ENCODE measurements at regions of chr2 and their contacts with region 1.

Region 1: GRCh38 chr2:240434728-240435456 is 571 bp upstream of the GPC1 start:
- DNase-seq: peak; percentile 69
- ATAC-seq: peak; percentile 60
- H3K4me3 ChIP-seq: peak overlapping the region; percentile 74 to 96
- H3K27ac ChIP-seq: peak overlapping the region; percentile 81
- H3K4me1 ChIP-seq: peaks cover 29 to 57% of the 10 kb centered on the region in 2 experiments
- H3K27me3 ChIP-seq: no peaks in the 10 kb centered on the region
- CTCF ChIP-seq: no peak
- POLR2A ChIP-seq: no peak
- RAD21 ChIP-seq: no peak

Region 2: DNA sequence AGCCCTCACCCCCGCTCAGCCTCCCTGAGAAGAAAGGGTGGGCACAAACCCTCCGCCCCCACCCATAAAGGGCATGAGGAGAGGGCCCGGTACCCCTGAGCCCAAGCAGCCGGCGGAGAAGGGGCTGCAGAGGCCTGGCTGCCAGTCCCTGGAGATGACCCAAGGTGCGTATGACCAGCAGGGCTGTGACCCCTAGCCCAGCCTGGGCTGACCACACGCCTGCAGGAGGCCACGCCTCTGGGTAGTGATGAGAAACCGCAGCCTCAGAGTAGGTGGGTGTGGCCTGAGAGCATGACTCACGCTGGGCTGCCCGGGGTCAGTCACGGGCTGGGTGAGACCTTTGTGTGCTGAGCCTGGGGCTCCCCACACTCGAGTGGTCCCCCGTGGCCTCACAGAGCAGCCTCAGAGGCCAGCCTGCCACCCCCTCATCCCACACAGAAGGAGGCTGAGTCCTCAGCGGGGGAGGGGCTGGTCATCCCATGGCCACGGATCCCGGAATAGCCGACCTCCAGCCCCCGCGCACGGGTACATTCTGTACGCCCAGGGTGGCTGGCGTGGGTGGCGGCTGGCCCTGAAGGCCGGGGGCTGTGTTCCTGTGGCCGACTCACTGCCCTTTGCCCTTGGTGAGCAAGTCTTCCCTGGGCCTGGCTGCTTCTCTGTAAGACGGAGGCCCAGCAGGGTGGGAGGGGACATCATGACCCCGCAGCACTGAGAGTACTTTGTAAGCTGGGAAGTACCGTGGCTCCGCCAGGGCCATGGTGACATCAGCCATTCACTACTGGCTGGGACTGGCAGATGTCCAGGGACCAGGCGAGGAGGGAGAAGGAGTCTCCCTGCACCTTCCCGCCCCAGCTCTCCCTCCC is 183.7 kb before region 1 on chr2:
- CTCF ChIA-PET with region 1: no interaction called
- POLR2A ChIA-PET with region 1: no interaction called
- RAD21 ChIA-PET with region 1: no interaction called
- intact Hi-C with region 1: loop called (anchors 5 kb)
- DNase-seq: peak; percentile 77
- ATAC-seq: peak; percentile 82
- H3K4me3 ChIP-seq: peak overlapping the region; percentile 28 to 60
- H3K27ac ChIP-seq: peak overlapping the region; percentile 85
- H3K4me1 ChIP-seq: peaks cover 40 to 74% of the 10 kb centered on the region in 2 experiments
- H3K27me3 ChIP-seq: no peaks in the 10 kb centered on the region
- CTCF ChIP-seq: no peak
- POLR2A ChIP-seq: no peak
- RAD21 ChIP-seq: no peak

Region 3: DNA sequence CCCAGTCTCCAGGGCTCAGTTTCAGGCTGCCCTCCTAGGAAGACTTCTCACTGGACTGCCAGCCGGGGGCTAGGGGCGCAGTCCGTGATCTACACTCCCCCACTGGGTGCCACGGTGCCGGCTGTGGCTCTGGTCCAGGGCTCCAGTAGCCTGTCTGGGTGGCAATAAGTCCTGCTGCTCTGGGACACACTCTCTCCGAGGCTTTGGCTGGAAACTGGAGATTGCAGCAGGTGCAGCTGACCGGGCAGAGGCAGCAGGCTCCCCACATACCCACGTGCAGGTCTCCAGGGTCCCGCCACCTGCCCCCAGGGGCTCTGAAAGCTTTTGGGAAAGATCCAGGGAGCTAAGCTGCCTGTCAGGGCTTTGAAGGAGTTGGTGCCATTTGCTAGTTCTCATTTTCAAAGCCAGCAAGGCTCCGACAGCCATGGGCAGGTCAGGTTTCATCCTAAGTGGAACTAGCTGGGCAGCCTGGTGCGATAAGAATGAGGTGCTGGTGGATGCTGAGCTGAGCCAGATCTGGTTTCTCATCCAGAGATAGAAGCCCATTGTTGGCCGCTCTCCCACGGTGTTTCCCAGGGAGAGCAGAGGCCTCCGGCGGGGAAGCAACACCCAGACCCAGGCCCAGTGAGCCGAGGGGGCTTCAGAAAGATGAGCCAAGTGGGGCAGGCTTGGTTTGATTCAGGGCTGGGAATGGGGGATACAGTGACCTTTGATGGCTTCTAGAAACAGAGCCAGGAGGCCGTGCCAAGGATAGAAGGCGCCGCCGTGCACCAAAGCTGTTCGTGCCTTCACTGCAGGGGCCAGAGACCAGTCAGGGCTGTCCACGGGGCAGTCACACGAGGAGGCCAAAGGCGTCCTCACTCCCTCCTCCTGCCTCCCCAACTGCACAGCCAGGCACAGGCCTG is 141.1 kb before region 1 on chr2:
- CTCF ChIA-PET with region 1: no interaction called
- POLR2A ChIA-PET with region 1: no interaction called
- RAD21 ChIA-PET with region 1: no interaction called
- intact Hi-C with region 1: loop called (anchors 10 kb)
- DNase-seq: no peak
- ATAC-seq: no peak
- H3K4me3 ChIP-seq: no peak overlapping the region
- H3K27ac ChIP-seq: no peak overlapping the region
- H3K4me1 ChIP-seq: peaks cover 8 to 16% of the 10 kb centered on the region in 2 experiments
- H3K27me3 ChIP-seq: no peaks in the 10 kb centered on the region
- CTCF ChIP-seq: no peak
- POLR2A ChIP-seq: no peak
- RAD21 ChIP-seq: no peak

Region 4: GRCh38 chr2:240369801-240370585 is 64.9 kb before region 1 on chr2:
- CTCF ChIA-PET with region 1: no interaction called
- POLR2A ChIA-PET with region 1: no interaction called
- RAD21 ChIA-PET with region 1: interaction called in 1 of 2 experiments, 3 read pairs
- intact Hi-C with region 1: loop called (anchors 1 kb)
- DNase-seq: peak; percentile 64
- ATAC-seq: peak; percentile 82
- H3K4me3 ChIP-seq: peak overlapping the region; percentile 9 to 51
- H3K27ac ChIP-seq: peak overlapping the region; percentile 63
- H3K4me1 ChIP-seq: peaks cover 56 to 68% of the 10 kb centered on the region in 2 experiments
- H3K27me3 ChIP-seq: no peaks in the 10 kb centered on the region
- CTCF ChIP-seq: no peak
- POLR2A ChIP-seq: no peak
- RAD21 ChIP-seq: no peak; the same call in 1 of the 2 replicates

Region 5: DNA sequence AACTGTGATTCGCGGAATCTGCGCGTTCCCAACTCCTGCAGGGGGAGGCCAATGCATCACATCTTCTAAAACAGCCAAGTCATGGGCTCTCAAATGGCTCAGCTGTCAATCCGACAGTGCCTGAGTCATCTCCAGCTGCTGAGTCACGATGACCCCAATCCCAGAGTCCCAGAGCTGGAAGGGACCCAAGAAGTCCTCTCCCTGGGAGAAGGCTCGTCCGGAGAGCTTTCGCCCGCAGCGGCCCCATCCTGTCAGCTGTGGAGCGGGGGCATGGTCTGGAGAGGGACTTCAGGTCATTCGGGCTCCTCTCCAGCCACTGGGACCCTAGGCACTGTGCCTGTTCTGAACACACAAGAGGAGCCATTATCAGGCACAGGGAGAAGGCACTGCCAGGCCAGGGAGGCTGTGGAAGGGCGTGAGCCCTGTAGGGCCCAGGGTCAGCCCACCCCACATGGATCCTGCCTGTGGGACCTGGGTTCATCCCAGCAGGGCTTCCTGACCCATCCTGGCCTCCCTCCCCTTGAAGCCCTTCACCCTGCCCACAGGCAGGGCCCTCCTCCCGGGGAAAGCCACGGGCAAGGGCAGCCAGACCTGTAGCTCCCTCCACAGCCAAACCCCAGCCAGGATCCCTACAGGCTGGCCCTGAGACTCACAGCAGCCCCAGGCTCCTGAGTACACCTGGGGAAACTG is 47.1 kb before region 1 on chr2:
- CTCF ChIA-PET with region 1: no interaction called
- POLR2A ChIA-PET with region 1: no interaction called
- RAD21 ChIA-PET with region 1: interaction called in 1 of 2 experiments, 4 read pairs
- intact Hi-C with region 1: loop called (anchors 1 kb)
- DNase-seq: peak; percentile 65
- ATAC-seq: peak; percentile 62
- H3K4me3 ChIP-seq: peak overlapping the region in 1 of 2 experiments; percentile 44; a peak in 2 of 4 replicates
- H3K27ac ChIP-seq: peak overlapping the region; percentile 61
- H3K4me1 ChIP-seq: peaks cover 21 to 39% of the 10 kb centered on the region in 2 experiments
- H3K27me3 ChIP-seq: no peaks in the 10 kb centered on the region
- CTCF ChIP-seq: no peak
- POLR2A ChIP-seq: no peak
- RAD21 ChIP-seq: no peak

Measured in HCT116 (cell line).